CD4-positive, alpha-beta memory T cell (primary cell): ENCODE measurements at regions of chr5 and their contacts with region 1.

Region 1: DNA sequence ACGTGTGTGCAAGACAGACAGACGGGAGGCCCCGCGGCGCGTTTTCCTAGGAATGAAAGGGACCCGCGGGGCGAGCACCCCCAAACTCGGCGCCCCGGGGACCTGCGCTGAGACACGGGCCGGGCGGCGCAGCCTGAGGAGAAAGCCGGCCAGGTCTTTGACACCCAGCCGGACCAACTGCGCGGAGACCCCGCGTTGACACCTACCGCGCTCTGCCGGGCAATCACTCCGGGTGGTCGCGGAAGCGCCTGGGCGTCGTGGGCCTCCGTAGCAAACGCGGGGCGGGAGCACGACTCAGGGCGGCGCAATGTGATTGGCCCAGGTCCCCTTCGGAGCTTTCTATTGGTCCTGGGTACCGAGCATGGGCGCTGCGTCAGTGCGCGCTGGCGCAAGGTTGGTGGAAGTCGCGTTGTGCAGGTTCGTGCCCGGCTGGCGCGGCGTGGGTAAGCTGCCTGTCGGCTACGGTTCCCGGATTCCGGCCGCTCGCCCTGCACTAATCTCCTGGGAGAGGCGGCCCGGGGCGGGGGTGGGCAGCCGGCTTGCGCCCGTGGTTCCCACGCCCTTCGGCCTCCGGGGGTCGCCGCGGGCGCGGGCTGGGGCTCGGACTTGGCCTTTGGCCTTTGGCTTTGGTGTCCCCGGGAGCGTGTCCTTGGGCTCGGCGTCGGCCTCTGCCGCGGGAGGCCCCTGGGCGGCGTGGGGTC is at the starts of genes FASTKD3 and MTRR:
- DNase-seq: peak; percentile 87 to 91 (median 89)
- H3K4me3 ChIP-seq: peak within 1 kb of the TSS; percentile 62 to 77
- H3K4me3 Mint-ChIP-seq: peak within 1 kb of the TSS; percentile 95 to 99 (median 97)
- H3K27ac ChIP-seq: peak within 1 kb of the TSS; percentile 84
- H3K27ac Mint-ChIP-seq: peak within 1 kb of the TSS; percentile 90 to 98 (median 96)
- H3K4me1 ChIP-seq: peaks cover 66% of the 10 kb centered on the region
- H3K4me1 Mint-ChIP-seq: peaks cover 53 to 85% (median 76%) of the 10 kb centered on the region in 4 donors
- H3K27me3 ChIP-seq: no peaks in the 10 kb centered on the region
- H3K27me3 Mint-ChIP-seq: no peaks in the 10 kb centered on the region
- total RNA-seq, gene FASTKD3: 11.3 to 14.0 TPM
- total RNA-seq, gene MTRR: 97.1 to 107 TPM

Region 2: GRCh38 chr5:6632917-6633468 is 1235.9 kb before region 1 on chr5 and contains the starts of genes NSUN2 and SRD5A1:
- CTCF ChIA-PET with region 1: no interaction called
- POLR2A ChIA-PET with region 1: interaction called, 6 read pairs
- intact Hi-C with region 1: loop called (anchors 1 kb)
- DNase-seq: peak; percentile 92 to 98 (median 95)
- H3K4me3 ChIP-seq: peak within 1 kb of the TSS; percentile 66 to 94
- H3K4me3 Mint-ChIP-seq: peak within 1 kb of the TSS; percentile 84 to 99 (median 93)
- H3K27ac ChIP-seq: peak within 1 kb of the TSS; percentile 87
- H3K27ac Mint-ChIP-seq: peak within 1 kb of the TSS; percentile 92 to 99 (median 99)
- H3K4me1 ChIP-seq: peaks cover 36% of the 10 kb centered on the region
- H3K4me1 Mint-ChIP-seq: peaks cover 30 to 60% (median 39%) of the 10 kb centered on the region in 4 donors
- H3K27me3 ChIP-seq: no peaks in the 10 kb centered on the region
- H3K27me3 Mint-ChIP-seq: no peaks in the 10 kb centered on the region
- total RNA-seq, gene NSUN2: 78.0 to 81.6 TPM
- total RNA-seq, gene SRD5A1: 7.8 to 9.2 TPM

Region 3: DNA sequence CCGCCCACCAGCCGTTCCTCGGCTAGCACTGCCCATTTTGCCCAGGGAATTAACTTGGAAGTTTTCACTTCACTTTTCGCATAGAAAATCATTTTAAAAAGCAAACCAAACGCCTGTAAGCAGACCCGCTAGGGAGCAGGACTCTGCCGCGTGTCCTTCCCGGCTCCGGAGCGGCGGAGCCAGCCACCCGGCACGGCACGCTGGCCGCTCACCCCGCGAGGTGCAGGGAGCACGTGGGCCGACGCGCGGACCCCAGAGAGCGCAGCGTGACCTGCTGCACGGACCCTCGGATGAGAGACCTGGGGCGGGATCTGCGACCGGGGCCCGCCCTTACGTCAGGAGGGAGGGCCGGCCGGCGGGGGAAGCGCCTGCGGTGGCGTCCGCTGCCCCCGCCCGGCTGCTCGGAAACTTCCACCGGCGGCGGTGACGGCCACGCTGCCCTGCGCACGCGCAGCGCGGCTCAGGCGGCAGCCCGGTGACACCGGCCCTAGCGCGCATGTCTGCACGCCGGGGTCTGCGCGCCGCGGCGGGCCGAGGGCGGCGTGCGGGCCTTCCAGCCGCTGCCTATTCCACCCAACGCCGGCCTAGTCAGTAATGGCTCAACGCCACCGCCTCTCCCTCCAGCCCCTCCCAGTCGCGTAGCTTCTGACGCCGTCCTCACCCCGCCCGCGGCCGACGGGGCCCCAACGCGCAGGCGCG is 1156.2 kb before region 1 on chr5:
- CTCF ChIA-PET with region 1: no interaction called
- POLR2A ChIA-PET with region 1: interaction called, 5 read pairs
- intact Hi-C with region 1: loop called (anchors 5 kb)
- DNase-seq: peak; percentile 96 to 99 (median 99)
- H3K4me3 ChIP-seq: peak overlapping the region; percentile 70 to 81
- H3K4me3 Mint-ChIP-seq: peak overlapping the region; percentile 88 to 91 (median 90)
- H3K27ac ChIP-seq: peak overlapping the region; percentile 86
- H3K27ac Mint-ChIP-seq: peak overlapping the region; percentile 92 to 95 (median 94)
- H3K4me1 ChIP-seq: peaks cover 31% of the 10 kb centered on the region
- H3K4me1 Mint-ChIP-seq: peaks cover 26 to 39% (median 33%) of the 10 kb centered on the region in 4 donors
- H3K27me3 ChIP-seq: no peaks in the 10 kb centered on the region
- H3K27me3 Mint-ChIP-seq: no peaks in the 10 kb centered on the region

Region 4: DNA sequence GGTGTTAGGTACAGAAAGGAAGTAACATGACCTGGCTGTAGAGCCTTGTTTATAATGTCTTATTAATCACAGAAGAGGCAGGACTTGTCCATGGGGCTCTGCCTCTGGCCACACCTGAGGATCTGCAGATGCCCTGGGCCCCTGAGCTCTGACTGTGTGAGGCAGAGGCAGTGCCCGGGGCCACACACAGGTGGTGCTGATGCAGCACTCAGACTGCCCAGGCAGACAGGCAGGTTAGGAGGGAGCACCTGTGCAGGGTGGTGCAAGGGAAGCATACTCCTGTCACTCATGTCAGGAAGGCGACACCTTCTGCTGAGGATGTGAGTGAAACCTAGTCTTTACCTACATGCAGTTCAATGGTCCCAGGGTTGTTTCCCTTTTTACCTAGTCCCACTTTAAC is 106.7 kb before region 1 on chr5:
- CTCF ChIA-PET with region 1: no interaction called
- POLR2A ChIA-PET with region 1: no interaction called
- intact Hi-C with region 1: no loop called
- DNase-seq: no peak
- H3K4me3 ChIP-seq: no peak overlapping the region
- H3K4me3 Mint-ChIP-seq: no peak overlapping the region
- H3K27ac ChIP-seq: no peak overlapping the region
- H3K27ac Mint-ChIP-seq: no peak overlapping the region
- H3K4me1 ChIP-seq: no peaks in the 10 kb centered on the region
- H3K4me1 Mint-ChIP-seq: peaks cover 0 to 2% (median 0%) of the 10 kb centered on the region in 4 donors
- H3K27me3 ChIP-seq: no peaks in the 10 kb centered on the region
- H3K27me3 Mint-ChIP-seq: peaks cover 11 to 29% of the 10 kb centered on the region in 2 donors

Region 5: GRCh38 chr5:7805379-7805778 is 63.5 kb before region 1 on chr5:
- CTCF ChIA-PET with region 1: no interaction called
- POLR2A ChIA-PET with region 1: no interaction called
- intact Hi-C with region 1: no loop called
- DNase-seq: no peak
- H3K4me3 ChIP-seq: no peak overlapping the region
- H3K4me3 Mint-ChIP-seq: no peak overlapping the region
- H3K27ac ChIP-seq: no peak overlapping the region
- H3K27ac Mint-ChIP-seq: no peak overlapping the region
- H3K4me1 ChIP-seq: no peaks in the 10 kb centered on the region
- H3K4me1 Mint-ChIP-seq: no peaks in the 10 kb centered on the region
- H3K27me3 ChIP-seq: no peaks in the 10 kb centered on the region
- H3K27me3 Mint-ChIP-seq: peaks cover 3 to 6% of the 10 kb centered on the region in 2 donors

Region 6: DNA sequence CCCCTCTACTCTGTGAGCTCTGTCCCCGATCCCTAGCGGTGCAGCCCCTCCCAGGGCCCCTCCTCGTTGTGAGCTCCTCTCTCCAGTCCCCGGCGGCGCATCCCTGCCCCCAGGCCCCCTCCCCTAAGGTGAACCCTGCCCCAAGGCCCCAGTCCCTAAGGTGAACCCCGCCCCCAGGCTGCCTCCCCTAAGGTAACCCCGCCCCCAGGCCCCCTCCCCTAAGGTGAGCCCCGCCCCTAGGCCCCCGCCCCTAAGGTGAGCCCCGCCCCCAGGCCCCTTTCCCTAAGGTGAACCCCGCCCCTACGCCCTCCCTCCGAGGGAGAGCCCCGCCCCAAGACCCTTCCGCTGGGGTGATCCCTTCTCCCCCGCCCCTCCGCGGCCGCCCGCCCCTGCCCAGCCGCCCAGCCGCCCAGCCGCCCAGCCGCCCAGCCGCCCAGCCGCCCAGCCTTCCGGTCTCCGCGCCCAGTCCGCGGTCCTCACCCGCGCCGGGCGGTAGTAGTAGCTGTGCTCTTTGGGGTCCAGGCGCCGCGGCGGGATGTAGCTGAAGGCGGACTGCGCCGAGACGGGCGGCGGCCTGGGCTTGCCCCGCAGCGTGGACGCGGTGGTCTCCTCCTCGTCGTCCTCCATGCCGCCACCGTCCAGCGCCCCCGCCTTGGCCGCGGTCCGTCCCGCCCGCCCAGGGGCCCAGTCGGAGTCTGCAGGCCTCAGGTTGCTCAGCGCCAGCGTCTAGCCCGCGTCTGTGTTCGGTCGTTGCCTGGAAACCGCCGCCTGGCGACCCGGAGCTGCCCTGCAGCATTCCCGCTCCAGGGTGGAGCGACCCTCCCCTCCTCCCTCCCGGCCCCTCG is 18.3 kb before region 1 on chr5 and contains the start of gene CFAP90:
- CTCF ChIA-PET with region 1: interaction called, 45 read pairs
- POLR2A ChIA-PET with region 1: interaction called, 19 read pairs
- intact Hi-C with region 1: loop called (anchors 1 kb)
- DNase-seq: peak in 3 of 5 donors; percentile 27 to 55 (median 32)
- H3K4me3 ChIP-seq: peak within 1 kb of the TSS in 1 of 2 donors; percentile 41
- H3K4me3 Mint-ChIP-seq: peak within 1 kb of the TSS; percentile 80 to 90 (median 86)
- H3K27ac ChIP-seq: no peak within 1 kb of the TSS
- H3K27ac Mint-ChIP-seq: peak within 1 kb of the TSS; percentile 5 to 89 (median 70)
- H3K4me1 ChIP-seq: peaks cover 26% of the 10 kb centered on the region
- H3K4me1 Mint-ChIP-seq: peaks cover 14 to 32% (median 22%) of the 10 kb centered on the region in 4 donors
- H3K27me3 ChIP-seq: peaks cover 15% of the 10 kb centered on the region
- H3K27me3 Mint-ChIP-seq: peaks cover 16 to 17% of the 10 kb centered on the region in 2 donors
- total RNA-seq, gene CFAP90: not detected

Region 7: DNA sequence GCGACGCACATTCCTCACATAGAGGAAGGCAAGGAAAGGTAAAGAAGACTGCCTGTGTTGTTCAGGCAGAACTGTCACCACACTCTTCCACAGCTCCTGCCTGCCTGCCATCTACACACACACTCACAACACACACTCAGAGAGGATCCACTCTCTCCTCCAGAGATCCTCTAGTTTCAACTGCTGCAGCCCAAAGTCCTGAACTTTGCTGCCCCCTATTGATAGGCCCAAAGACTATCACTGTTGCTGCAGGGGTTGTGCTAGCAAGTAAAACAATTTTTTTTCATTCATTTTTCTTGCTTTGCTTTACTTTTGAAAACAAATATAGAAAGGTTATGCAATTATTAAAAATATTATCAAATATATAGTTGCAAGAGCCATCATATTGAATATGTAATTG is 12.1 kb before region 1 on chr5:
- CTCF ChIA-PET with region 1: interaction called, 45 read pairs
- POLR2A ChIA-PET with region 1: interaction called, 30 read pairs
- intact Hi-C with region 1: loop called (anchors 1 kb)
- DNase-seq: peak in 4 of 5 donors; percentile 36 to 46 (median 42)
- H3K4me3 ChIP-seq: no peak overlapping the region
- H3K4me3 Mint-ChIP-seq: no peak overlapping the region
- H3K27ac ChIP-seq: no peak overlapping the region
- H3K27ac Mint-ChIP-seq: no peak overlapping the region
- H3K4me1 ChIP-seq: peaks cover 24% of the 10 kb centered on the region
- H3K4me1 Mint-ChIP-seq: peaks cover 21 to 33% (median 27%) of the 10 kb centered on the region in 4 donors
- H3K27me3 ChIP-seq: no peaks in the 10 kb centered on the region
- H3K27me3 Mint-ChIP-seq: no peaks in the 10 kb centered on the region

Region 8: GRCh38 chr5:7886849-7887475 is 18.0 kb after region 1 on chr5:
- CTCF ChIA-PET with region 1: interaction called, 58 read pairs
- POLR2A ChIA-PET with region 1: interaction called, 12 read pairs
- intact Hi-C with region 1: loop called (anchors 1 kb)
- DNase-seq: peak in 4 of 5 donors; percentile 26 to 44 (median 37)
- H3K4me3 ChIP-seq: no peak overlapping the region
- H3K4me3 Mint-ChIP-seq: no peak overlapping the region
- H3K27ac ChIP-seq: no peak overlapping the region
- H3K27ac Mint-ChIP-seq: peak overlapping the region in 4 of 7 donors; percentile 10 to 50 (median 23)
- H3K4me1 ChIP-seq: no peaks in the 10 kb centered on the region
- H3K4me1 Mint-ChIP-seq: peaks cover 4 to 13% (median 8%) of the 10 kb centered on the region in 4 donors
- H3K27me3 ChIP-seq: no peaks in the 10 kb centered on the region
- H3K27me3 Mint-ChIP-seq: no peaks in the 10 kb centered on the region